ENCODE measurements at regions of chr15 and their contacts with region 1.

Region 1: GRCh38 chr15:68304589-68305337 is 27.2 kb downstream of the FEM1B start:
- DNase-seq: peak in 1 of 2 experiments; percentile 63
- H3K4me3 ChIP-seq: no peak overlapping the region
- H3K27ac ChIP-seq: no peak overlapping the region
- H3K4me1 ChIP-seq: peaks cover 7 to 23% (median 17%) of the 10 kb centered on the region in 4 experiments
- H3K27me3 ChIP-seq: no peaks in the 10 kb centered on the region
- CTCF ChIP-seq: peak; percentile 36 to 69 (median 47)
- EP300 ChIP-seq: no peak
- POLR2A ChIP-seq: no peak; a peak in 1 of 3 replicates
- RAD21 ChIP-seq: peak; percentile 31 to 55

Region 2: DNA sequence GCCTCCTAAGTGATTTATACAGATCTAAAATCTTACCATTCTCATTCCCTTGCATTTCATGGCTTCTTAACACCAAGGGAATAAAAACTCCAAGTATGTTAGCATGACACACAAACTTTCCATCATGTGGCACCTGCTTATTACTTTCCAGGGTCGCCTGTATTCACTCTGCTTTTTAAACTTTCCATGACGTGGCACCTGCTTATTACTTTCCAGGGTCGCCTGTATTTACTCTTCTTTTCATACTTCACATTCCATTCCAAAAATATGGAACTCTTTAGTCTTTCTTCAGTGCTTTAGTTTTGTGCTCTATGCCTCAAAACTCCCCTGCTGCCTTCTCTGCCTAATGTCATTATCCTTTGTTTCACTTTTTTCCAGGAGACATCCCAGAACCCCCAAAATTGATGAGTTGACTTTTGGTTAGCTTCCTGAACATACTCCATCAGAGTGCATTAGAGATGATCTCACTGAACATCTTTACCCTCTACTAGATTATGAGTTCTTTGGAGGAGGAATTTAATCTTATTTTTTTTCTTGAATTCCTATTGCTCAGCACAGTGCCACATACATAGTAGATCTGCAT is 146.6 kb before region 1 on chr15:
- CTCF ChIA-PET with region 1: no interaction called
- POLR2A ChIA-PET with region 1: no interaction called
- DNase-seq: no peak
- H3K4me3 ChIP-seq: no peak overlapping the region
- H3K27ac ChIP-seq: no peak overlapping the region
- H3K4me1 ChIP-seq: no peaks in the 10 kb centered on the region
- H3K27me3 ChIP-seq: no peaks in the 10 kb centered on the region
- CTCF ChIP-seq: no peak
- EP300 ChIP-seq: no peak
- POLR2A ChIP-seq: no peak
- RAD21 ChIP-seq: no peak

Region 3: DNA sequence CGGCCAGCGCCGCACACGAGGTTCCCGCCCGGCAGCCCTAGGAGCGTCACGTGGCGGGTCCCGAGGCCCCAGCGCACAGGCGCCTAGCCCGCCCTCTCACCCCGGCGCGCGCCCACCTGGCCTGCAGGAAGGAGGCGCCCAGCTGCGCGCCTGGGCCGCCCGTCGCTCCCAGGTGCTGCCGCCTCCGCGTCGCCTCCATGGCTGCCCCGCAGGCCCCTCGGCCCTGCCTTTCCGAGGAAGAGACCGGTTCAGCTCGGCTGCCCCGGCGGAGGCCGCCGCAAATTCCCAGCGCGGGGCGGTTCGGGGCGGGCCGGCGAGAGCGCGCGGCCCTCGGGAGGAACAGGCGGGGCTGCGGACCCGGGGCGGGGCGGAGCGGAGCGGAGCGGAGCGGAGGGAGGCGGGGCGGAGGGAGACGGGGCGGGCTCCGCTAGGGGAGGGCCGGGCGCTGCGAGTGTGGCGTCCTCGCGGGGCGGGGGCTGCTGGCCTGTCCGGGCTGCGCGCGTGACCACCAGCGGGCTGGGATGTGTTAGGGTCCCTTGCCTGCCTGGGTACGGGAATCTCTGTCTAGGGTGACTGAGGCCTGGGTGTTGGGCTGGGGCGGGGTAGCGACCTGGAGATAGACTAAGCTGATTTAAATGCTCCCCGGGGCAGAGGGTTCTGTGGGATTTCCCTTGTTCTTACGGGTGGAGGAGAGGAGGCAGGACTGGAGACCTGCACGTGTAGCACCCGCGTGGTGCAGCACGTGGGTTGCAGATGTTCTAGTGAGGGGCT is 75.2 kb before region 1 on chr15 and contains the start of gene CLN6:
- CTCF ChIA-PET with region 1: interaction called, 26 read pairs
- POLR2A ChIA-PET with region 1: interaction called, 4 read pairs
- DNase-seq: peak in 1 of 2 experiments; percentile 88
- H3K4me3 ChIP-seq: peak within 1 kb of the TSS; percentile 51 to 92 (median 78)
- H3K27ac ChIP-seq: peak within 1 kb of the TSS; percentile 90
- H3K4me1 ChIP-seq: peaks cover 7 to 17% (median 11%) of the 10 kb centered on the region in 4 experiments
- H3K27me3 ChIP-seq: peaks cover 0 to 2% (median 0%) of the 10 kb centered on the region in 4 experiments; a peak in 1 of 7 replicates
- CTCF ChIP-seq: no peak
- EP300 ChIP-seq: no peak; a peak in 1 of 3 replicates
- POLR2A ChIP-seq: peak; percentile 40 to 53; a peak in 2 of 3 replicates
- RAD21 ChIP-seq: no peak
- total RNA-seq, gene CLN6: 60.0 and 62.3 TPM in 2 replicates

Region 4: GRCh38 chr15:68258692-68259091 is 46.1 kb before region 1 on chr15:
- CTCF ChIA-PET with region 1: interaction called, 199 read pairs
- POLR2A ChIA-PET with region 1: interaction called, 6 read pairs
- DNase-seq: no peak
- H3K4me3 ChIP-seq: no peak overlapping the region
- H3K27ac ChIP-seq: no peak overlapping the region
- H3K4me1 ChIP-seq: peaks cover 3 to 15% (median 9%) of the 10 kb centered on the region in 4 experiments; a peak in 6 of 7 replicates
- H3K27me3 ChIP-seq: no peaks in the 10 kb centered on the region
- CTCF ChIP-seq: no peak
- EP300 ChIP-seq: no peak
- POLR2A ChIP-seq: no peak
- RAD21 ChIP-seq: no peak

Region 5: GRCh38 chr15:68316061-68316804 is 11.5 kb after region 1 on chr15:
- CTCF ChIA-PET with region 1: interaction called, 47 read pairs
- POLR2A ChIA-PET with region 1: interaction called, 3 read pairs
- DNase-seq: peak in 1 of 2 experiments; percentile 72
- H3K4me3 ChIP-seq: peak overlapping the region in 1 of 4 experiments; percentile 25; a peak in 1 of 8 replicates
- H3K27ac ChIP-seq: no peak overlapping the region
- H3K4me1 ChIP-seq: peaks cover 0 to 20% (median 15%) of the 10 kb centered on the region in 4 experiments; a peak in 6 of 7 replicates
- H3K27me3 ChIP-seq: no peaks in the 10 kb centered on the region
- CTCF ChIP-seq: peak; percentile 75 to 82 (median 77)
- EP300 ChIP-seq: no peak
- POLR2A ChIP-seq: no peak
- RAD21 ChIP-seq: peak; percentile 51 to 68

Region 6: DNA sequence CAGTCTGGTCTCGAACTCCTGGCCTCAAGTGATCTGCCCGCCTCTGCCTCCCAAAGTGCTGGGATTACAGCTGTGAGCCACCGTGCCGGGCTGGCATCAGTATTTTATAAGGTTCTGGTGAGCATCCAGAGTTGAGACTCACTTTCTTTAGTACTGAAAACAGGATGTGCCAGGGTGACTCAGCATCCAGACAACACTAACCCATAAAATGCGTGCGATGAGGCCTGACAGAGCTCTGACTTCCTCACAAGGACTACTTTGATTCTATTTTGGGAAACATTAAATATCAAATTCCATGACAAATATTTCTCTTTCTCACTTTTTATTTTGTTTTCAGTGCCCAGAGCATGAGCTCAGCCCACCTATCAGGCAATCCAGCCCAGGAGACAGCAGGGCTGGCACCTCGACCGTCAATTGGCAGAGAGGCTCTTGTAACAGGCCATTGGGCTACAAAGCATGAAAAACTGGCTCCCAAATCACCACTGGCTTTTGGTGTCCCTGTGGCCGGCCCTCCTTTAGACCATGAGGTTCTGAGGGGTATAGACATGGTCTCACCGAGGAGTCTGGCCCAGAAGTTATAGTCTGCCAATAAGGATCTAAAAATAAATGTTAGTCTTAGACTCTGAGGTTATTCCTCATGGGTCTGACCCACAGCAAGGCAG is 47.8 kb after region 1 on chr15:
- CTCF ChIA-PET with region 1: interaction called, 28 read pairs
- POLR2A ChIA-PET with region 1: no interaction called
- DNase-seq: no peak
- H3K4me3 ChIP-seq: no peak overlapping the region
- H3K27ac ChIP-seq: no peak overlapping the region
- H3K4me1 ChIP-seq: no peaks in the 10 kb centered on the region
- H3K27me3 ChIP-seq: no peaks in the 10 kb centered on the region
- CTCF ChIP-seq: no peak
- EP300 ChIP-seq: no peak
- POLR2A ChIP-seq: no peak
- RAD21 ChIP-seq: no peak

Region 7: DNA sequence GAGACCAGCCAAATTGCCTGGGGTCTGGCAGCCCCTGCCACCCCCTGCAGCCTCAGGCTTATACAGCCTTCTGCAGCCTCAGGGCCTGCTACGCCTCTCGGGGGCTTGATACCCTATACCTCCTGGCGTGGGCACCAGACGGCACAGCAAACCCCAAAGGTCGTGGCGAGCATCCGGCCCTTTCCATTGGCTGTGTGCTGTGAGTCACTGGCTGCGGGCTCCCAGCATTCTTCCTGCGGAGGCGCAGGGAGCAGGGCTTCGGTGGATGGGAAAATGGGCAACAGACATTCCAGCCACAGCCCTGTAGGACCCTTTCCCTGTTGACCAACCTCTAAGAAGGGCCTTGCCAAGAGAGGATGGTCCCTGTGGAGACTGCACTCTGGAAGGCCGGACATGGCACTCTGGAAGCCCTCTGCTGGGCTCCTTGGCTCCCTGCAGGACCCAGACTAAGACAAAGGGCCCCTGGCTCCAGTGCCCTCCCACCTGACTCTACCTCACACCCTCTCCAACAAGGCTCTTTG is 67.6 kb after region 1 on chr15:
- CTCF ChIA-PET with region 1: interaction called, 44 read pairs
- POLR2A ChIA-PET with region 1: no interaction called
- DNase-seq: peak in 1 of 2 experiments; percentile 73
- H3K4me3 ChIP-seq: no peak overlapping the region
- H3K27ac ChIP-seq: no peak overlapping the region
- H3K4me1 ChIP-seq: no peaks in the 10 kb centered on the region
- H3K27me3 ChIP-seq: no peaks in the 10 kb centered on the region
- CTCF ChIP-seq: peak; percentile 58 to 76 (median 58)
- EP300 ChIP-seq: no peak
- POLR2A ChIP-seq: no peak
- RAD21 ChIP-seq: peak; percentile 41 to 62

Region 8: GRCh38 chr15:68465861-68466560 is 161.2 kb after region 1 on chr15:
- CTCF ChIA-PET with region 1: interaction called, 10 read pairs
- POLR2A ChIA-PET with region 1: no interaction called
- DNase-seq: no peak
- H3K4me3 ChIP-seq: no peak overlapping the region
- H3K27ac ChIP-seq: no peak overlapping the region
- H3K4me1 ChIP-seq: no peaks in the 10 kb centered on the region; a peak in 1 of 7 replicates
- H3K27me3 ChIP-seq: no peaks in the 10 kb centered on the region; a peak in 1 of 7 replicates
- CTCF ChIP-seq: no peak
- EP300 ChIP-seq: no peak
- POLR2A ChIP-seq: no peak
- RAD21 ChIP-seq: no peak